Aorta (tissue), 5 donors: ENCODE measurements at regions of chr10 and their contacts with region 1.

Region 1: GRCh38 chr10:34815185-34816084 is at the start of gene PARD3:
- DNase-seq: peak; percentile 56 to 86
- ATAC-seq: peak; percentile 78
- H3K4me3 ChIP-seq: peak within 1 kb of the TSS; percentile 83 to 86
- H3K27ac ChIP-seq: peak within 1 kb of the TSS in 1 of 2 donors; percentile 9
- H3K4me1 ChIP-seq: no peaks in the 10 kb centered on the region
- H3K27me3 ChIP-seq: no peaks in the 10 kb centered on the region
- total RNA-seq, gene PARD3: 27.7 to 33.0 TPM

Region 2: GRCh38 chr10:34702093-34702937 is 113.1 kb before region 1 on chr10:
- intact Hi-C with region 1: loop called in 1 of 2 experiments (anchors 10 kb)
- DNase-seq: no peak
- ATAC-seq: no peak
- H3K4me3 ChIP-seq: no peak overlapping the region
- H3K27ac ChIP-seq: no peak overlapping the region
- H3K4me1 ChIP-seq: peaks cover 5 to 7% of the 10 kb centered on the region in 2 donors
- H3K27me3 ChIP-seq: peaks cover 0 to 2% of the 10 kb centered on the region in 2 donors